Cardiac septum (tissue), 1 donor: ENCODE measurements at regions of chrX and their contacts with region 1.

Region 1: GRCh38 chrX:136268051-136269048 is 17.1 kb upstream of the MAP7D3 start:
- DNase-seq: no peak

Region 2: DNA sequence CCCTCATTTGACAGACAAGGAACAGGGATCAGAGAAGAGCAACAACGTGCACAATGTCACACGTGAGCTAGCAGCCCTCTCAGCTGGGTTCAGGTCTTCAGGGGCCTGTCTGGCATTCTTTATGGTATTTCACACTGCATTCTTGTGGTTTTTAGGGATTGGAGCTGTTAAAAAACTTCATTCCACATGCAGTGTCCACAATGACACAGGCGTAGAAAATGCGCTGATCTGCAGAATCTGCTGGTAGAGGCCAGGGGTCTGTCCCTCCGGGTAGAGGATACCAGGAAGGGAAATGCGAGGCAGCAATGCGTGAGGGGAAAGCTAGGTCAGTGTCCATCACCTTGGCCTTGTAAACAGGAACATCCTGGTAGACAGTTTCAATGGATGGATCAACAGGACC is 53.8 kb before region 1 on chrX:
- intact Hi-C with region 1: loop called (anchors 5 kb)
- DNase-seq: no peak

Region 3: GRCh38 chrX:136496770-136497598 is 228.6 kb after region 1 on chrX and contains the start of gene HTATSF1:
- intact Hi-C with region 1: loop called (anchors 10 kb)
- DNase-seq: peak; percentile 91
- total RNA-seq, gene HTATSF1: 66.2 TPM